Left cardiac atrium (tissue), 4 donors: ENCODE measurements at regions of chr4 and their contacts with region 1.

Region 1: GRCh38 chr4:136725286-136726081 is 806.8 kb downstream of the PCDH18 start:
- DNase-seq: no peak
- ATAC-seq: no peak

Region 2: GRCh38 chr4:135464311-135464710 is 1261.2 kb before region 1 on chr4:
- intact Hi-C with region 1: loop called in 1 of 2 experiments (anchors 10 kb)
- DNase-seq: no peak
- ATAC-seq: no peak

Region 3: DNA sequence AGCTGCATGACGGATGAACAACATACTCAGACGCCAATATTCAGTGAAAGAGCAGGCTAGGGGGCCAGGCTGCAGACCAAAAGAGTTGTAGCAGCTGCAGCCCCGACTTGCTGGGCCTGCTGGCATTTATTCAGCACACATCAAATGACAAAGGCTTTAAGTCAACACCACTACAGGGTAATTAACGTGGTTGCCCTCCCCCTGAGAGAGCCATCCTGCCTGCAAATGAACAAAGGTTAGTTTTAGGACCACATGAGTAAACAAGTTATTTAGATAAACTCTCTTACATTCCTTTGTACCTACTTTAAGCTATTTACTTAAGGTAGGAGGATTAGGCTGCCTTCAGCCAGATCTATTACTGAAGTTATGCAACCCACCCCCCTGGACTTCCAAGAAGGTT is 522.3 kb before region 1 on chr4:
- intact Hi-C with region 1: no loop called
- DNase-seq: no peak
- ATAC-seq: no peak

Region 4: DNA sequence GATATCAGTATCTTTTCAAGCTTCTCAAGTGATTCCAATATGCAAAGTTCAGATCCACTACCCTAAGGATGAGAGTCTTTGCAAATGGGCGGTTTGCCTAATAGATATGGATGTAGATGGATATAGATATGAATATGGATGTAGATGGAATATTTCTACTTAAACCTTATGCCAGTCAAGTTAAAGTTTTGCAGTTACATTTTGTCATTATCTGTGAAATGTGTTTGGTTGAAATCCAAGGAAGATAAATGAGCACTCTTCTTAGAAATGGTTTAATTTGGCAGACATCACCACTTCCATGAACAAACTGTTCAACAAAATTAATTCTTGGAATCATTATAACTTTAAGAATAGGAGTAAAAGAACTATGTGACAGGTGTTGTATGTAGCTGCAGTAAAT is 259.8 kb before region 1 on chr4:
- intact Hi-C with region 1: no loop called
- DNase-seq: no peak
- ATAC-seq: no peak

Region 5: DNA sequence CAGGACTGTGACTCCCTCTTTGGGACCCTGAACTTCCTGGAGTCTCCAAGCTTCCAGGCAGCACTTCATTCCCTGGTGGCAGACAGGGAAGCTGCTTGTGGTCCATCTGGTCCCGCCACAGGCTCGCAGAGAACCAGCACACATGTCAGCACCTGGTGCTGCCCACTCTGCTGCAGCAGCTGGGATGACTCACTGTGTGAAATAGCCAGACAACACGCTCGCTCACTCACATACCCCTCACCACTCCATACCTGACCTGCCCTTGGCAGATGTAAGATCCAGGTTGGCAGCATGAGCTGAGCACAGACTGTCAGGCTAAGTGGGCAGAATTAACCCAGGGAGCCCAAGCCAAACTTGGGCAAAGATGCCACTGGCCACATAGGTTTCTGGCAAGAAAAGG is 193.3 kb after region 1 on chr4:
- intact Hi-C with region 1: no loop called
- DNase-seq: no peak
- ATAC-seq: no peak

Region 6: DNA sequence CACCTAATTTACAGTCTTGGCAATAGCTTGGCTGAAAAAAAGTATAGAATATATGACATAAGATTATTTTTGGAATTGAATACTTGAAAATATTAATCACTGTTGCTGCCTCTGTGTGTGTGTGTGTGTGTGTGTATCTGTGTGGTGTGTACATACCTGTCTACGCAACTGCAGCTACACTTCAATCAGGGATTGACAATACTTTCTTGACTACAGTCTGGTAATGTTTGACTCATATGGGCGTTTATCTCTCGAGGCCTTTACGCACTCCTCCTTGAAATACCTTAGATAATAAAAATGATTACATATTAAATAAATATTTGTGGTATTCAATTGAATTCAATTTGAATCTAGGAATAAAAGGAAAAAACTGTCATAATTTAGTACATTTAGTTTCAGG is 241.6 kb after region 1 on chr4:
- intact Hi-C with region 1: no loop called
- DNase-seq: no peak
- ATAC-seq: peak in 1 of 2 donors; percentile 77